Common myeloid progenitor, CD34-positive (primary cell): ENCODE measurements at regions of chr1 and their contacts with region 1.

Region 1: DNA sequence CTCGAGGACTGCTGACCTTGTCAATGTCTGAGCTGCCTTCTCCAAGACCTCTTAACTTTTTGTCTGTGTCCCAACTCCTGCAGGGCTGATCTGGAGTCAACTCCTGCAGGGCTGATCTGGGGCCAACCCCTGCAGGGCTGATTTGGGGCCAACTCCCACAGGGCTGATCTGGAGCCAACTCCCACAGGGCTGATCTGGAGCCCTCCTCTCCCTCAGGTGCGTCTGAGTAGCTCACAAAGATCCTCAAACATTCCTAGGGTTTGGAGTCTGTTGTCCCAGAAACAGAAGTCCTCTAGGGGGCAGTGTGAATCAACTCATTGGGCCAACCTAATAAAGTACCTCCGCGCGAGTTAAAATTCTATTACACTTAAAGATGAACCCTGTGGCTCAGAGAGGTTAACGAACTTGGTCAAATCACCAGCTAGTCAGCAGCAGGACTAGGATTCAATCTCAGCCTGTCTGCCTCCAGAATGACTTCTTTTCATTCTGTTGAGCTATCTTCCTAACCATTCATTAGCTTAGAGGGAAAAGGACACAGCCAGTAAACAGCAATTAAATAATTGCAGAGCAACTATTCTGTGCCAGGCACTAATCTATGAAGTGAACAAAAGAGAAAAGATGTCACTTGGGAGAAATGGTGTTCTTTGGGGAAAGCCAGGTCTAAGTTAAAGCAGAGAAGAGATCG is 17.2 kb upstream of the RLF start:
- DNase-seq: peak; percentile 75 to 82 (median 78)
- H3K4me3 ChIP-seq: no peak overlapping the region
- H3K27ac ChIP-seq: no peak overlapping the region
- H3K4me1 ChIP-seq: no peaks in the 10 kb centered on the region
- H3K27me3 ChIP-seq: peaks cover 0 to 7% (median 2%) of the 10 kb centered on the region in 5 experiments

Region 2: GRCh38 chr1:39940980-39941871 is 202.8 kb before region 1 on chr1:
- CTCF ChIA-PET with region 1: no interaction called
- POLR2A ChIA-PET with region 1: no interaction called
- DNase-seq: no peak
- H3K4me3 ChIP-seq: no peak overlapping the region
- H3K27ac ChIP-seq: no peak overlapping the region
- H3K4me1 ChIP-seq: peaks cover 2 to 34% (median 17%) of the 10 kb centered on the region in 4 experiments
- H3K27me3 ChIP-seq: no peaks in the 10 kb centered on the region

Region 3: GRCh38 chr1:40132383-40133311 is 11.4 kb before region 1 on chr1:
- CTCF ChIA-PET with region 1: interaction called, 22 read pairs
- POLR2A ChIA-PET with region 1: no interaction called
- DNase-seq: no peak
- H3K4me3 ChIP-seq: no peak overlapping the region
- H3K27ac ChIP-seq: no peak overlapping the region
- H3K4me1 ChIP-seq: peaks cover 0 to 11% (median 9%) of the 10 kb centered on the region in 4 experiments
- H3K27me3 ChIP-seq: no peaks in the 10 kb centered on the region

Region 4: GRCh38 chr1:40210514-40211204 is 66.6 kb after region 1 on chr1:
- CTCF ChIA-PET with region 1: interaction called, 10 read pairs
- POLR2A ChIA-PET with region 1: no interaction called
- DNase-seq: no peak
- H3K4me3 ChIP-seq: no peak overlapping the region
- H3K27ac ChIP-seq: no peak overlapping the region
- H3K4me1 ChIP-seq: no peaks in the 10 kb centered on the region
- H3K27me3 ChIP-seq: no peaks in the 10 kb centered on the region

Region 5: GRCh38 chr1:40315239-40315794 is 171.3 kb after region 1 on chr1:
- CTCF ChIA-PET with region 1: interaction called, 11 read pairs
- POLR2A ChIA-PET with region 1: no interaction called
- DNase-seq: peak; percentile 88 to 96 (median 95)
- H3K4me3 ChIP-seq: peak overlapping the region; percentile 42 to 77 (median 60)
- H3K27ac ChIP-seq: no peak overlapping the region
- H3K4me1 ChIP-seq: peaks cover 0 to 43% (median 43%) of the 10 kb centered on the region in 4 experiments
- H3K27me3 ChIP-seq: peaks cover 5 to 35% (median 19%) of the 10 kb centered on the region in 5 experiments

Region 6: DNA sequence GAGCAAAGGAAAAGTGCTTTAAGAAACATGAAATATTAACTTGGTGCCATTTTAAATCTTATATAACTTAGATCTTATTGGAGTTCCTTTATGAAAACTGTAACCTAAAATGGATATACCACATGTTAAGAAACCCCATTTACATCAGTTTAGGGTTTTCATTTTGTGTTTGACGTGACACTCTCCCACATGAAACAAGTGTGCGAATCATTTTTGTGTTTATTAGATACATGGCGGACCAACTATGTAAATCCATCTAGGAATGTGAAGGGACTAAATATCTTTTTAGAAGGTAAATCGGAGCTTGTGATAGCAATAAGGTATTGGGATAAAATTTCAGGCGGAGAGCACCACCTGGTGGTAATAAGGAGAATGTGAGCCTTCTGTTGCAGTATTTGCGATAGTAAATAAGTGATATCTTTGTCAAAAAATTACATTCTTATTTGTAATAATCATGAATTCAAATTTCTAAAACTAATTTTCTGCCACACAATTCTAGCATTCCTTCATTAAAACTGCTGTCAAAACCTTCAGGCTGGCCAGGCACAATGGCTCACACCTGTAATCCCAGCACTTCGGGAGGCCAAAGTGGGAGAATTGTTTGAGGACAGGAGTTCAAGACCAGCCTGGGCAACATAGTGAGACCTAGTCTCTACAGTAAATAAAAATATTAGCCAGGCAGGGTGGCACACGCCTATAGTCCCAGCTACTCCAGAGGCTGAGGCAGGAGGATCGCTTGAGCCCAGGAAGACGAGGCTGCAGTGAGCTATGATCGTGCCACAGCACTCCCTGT is 260.8 kb after region 1 on chr1:
- CTCF ChIA-PET with region 1: interaction called, 23 read pairs
- POLR2A ChIA-PET with region 1: no interaction called
- DNase-seq: peak; percentile 77 to 86 (median 82)
- H3K4me3 ChIP-seq: peak overlapping the region in 1 of 7 experiments; percentile 54
- H3K27ac ChIP-seq: no peak overlapping the region
- H3K4me1 ChIP-seq: peaks cover 3 to 20% (median 16%) of the 10 kb centered on the region in 4 experiments
- H3K27me3 ChIP-seq: no peaks in the 10 kb centered on the region